Prostate gland (tissue), 2 donors: ENCODE measurements at regions of chr11 and their contacts with region 1.

Region 1: DNA sequence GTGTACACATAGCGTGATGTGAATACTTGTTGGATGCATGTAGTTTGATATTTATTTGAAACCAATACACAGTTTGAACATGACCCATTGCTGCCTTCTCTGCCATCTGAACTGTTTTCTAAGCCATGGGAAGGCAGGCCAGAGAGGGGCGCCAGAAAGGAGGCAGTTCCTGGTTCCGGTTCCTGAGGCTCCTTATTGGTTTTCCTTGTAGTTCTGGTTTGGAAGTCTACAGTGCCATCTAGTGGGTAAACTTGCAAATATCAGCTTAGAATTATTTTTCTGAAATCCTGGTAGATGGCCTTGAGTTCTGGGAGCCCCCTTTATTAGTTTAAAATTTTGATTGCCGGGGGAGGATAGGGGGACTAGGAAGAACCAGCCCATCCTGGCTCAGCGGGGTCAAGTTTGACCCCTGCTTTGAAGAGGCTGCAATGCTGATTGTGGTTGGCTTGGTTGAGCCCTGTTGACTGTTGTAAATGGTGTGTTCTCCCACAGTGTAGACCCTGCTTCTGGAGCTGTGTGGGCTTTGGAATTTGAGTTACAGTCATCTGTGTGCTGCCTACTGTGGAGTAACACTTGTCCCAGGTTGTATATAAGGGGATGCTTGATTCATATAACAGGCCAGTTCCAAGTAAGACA is 48.4 kb downstream of the GRAMD1B start:
- DNase-seq: peak; percentile 11
- H3K4me3 ChIP-seq: no peak overlapping the region
- H3K27ac ChIP-seq: no peak overlapping the region
- H3K4me1 ChIP-seq: no peaks in the 10 kb centered on the region
- H3K27me3 ChIP-seq: no peaks in the 10 kb centered on the region
- CTCF ChIP-seq: peak; percentile 28 to 79 (median 68)
- POLR2A ChIP-seq: no peak

Region 2: DNA sequence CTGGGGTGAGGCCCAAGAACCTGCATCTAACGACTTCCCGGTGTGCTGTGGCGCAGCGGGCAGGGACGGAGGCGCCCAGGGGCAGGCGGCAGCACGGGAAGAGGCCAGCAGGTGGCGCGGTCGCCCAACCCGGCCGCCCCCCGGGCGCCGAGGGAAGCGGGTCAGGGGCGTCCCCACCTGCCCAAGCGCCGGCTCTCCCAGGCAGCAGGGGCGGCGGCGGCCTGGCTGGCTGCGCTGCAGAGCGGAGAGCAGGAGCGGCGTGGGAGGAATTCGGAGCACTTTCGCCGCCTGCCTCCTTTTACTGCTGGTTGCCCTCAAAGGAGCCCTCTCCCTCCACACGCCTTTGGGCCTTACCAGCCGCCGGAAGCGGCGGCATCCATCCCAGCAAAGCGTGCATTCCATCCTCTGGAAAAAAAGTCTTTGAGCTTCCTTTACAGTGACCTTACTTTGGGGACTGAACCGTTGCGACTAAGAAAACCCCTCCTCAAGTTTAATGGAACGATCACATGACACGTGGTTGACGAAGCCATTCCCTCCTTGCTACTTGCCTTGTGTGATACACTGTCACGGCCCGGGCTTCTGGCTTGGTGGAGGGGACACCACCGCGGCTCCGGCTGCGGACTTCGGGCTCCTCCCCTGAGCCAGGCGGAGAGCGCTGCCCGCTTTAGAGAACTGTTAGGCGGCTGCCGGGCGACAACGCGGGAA is 176.6 kb before region 1 on chr11:
- intact Hi-C with region 1: loop called (anchors 2 kb)
- DNase-seq: peak; percentile 30
- H3K4me3 ChIP-seq: peak overlapping the region; percentile 14 to 26
- H3K27ac ChIP-seq: no peak overlapping the region
- H3K4me1 ChIP-seq: no peaks in the 10 kb centered on the region
- H3K27me3 ChIP-seq: no peaks in the 10 kb centered on the region
- CTCF ChIP-seq: peak; percentile 61 to 83 (median 75)
- POLR2A ChIP-seq: no peak

Region 3: DNA sequence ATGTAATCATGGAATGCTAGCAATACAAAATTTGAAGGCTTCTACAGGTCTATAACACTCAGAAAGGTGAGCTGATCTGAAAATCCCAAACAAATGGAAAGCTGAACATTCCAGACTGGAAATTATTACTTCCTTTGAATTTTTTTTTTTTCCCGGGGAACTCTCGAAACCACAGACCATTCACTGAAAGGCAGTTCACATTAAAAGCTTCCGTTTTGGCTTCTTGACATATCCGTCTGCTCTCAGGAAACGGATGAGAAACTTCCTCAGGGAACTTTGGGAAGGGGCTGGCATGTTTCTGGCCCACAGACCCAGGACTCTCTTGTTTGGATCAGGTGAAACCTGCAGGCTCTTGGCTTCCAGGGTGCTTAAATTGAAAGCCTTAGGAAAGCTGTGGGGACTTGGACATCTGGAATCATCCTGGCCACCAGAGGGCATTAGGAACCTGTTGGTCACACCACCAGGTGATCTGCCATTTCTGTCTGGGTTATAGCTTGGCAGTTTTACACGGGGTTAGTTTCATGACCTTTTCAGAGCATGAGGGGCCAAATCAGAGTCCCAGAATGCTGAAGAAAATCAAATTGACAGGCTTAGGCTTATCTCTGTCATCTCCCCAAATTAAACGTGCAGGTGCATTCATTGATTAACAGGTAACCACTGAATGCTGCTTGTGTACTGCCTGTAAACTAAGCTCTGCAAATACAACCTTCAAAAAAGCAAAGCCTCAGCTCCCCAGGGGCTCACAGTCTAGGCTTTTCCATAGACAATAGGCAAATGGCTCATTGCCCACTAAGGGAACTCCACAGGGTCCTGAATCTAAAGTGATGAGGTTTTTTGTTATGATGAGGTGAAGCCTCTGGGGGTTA is 71.1 kb before region 1 on chr11:
- intact Hi-C with region 1: loop called (anchors 5 kb)
- DNase-seq: peak; percentile 68
- H3K4me3 ChIP-seq: no peak overlapping the region
- H3K27ac ChIP-seq: no peak overlapping the region
- H3K4me1 ChIP-seq: no peaks in the 10 kb centered on the region
- H3K27me3 ChIP-seq: no peaks in the 10 kb centered on the region
- CTCF ChIP-seq: peak; percentile 23 to 72 (median 56)
- POLR2A ChIP-seq: no peak